ENCODE measurements at regions of chr6 and their contacts with region 1.

Region 1: DNA sequence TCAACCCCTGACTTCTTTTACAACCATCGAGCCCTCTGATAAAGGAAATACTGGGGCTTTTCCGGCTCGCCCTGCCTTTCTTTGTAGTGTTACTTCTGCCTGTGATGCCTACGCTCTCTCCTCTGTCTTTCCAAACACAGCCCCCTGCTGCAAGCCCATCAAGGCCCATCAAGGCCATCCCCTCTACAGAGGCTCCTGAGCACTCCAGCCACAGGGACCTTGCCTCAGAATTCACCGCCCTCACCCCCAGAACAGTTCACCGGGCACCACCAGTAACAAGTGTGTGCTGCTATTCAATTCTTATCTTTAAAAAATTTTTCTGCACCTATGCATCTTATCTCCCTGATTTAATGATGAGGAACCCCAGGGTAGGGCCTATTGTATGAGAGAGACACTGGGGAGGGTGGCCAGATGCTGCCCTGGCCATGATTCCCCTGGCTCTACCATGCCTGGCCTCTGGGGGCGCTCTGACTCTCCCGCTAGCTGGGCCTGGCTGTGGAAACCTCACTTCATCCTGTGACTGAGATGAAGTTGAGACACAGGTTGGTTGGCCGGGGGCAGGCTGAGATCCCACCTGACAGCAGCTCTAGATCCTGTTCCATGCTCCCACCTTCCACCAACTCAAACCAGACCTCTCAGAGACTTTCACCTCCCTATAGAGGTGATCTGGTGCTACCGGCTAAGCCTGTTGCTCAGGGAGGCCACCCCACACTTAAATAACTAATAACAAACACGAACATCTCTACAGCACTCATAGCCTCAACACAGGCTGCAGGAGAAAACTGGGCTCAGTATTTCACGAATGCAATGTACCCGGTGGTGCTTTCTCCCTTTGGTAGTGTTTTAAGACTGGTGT is 19.2 kb upstream of the GLP1R start:
- DNase-seq: peak; percentile 80
- ATAC-seq: peak; percentile 99
- H3K4me3 Mint-ChIP-seq: no peak overlapping the region
- H3K27ac Mint-ChIP-seq: no peak overlapping the region
- H3K4me1 Mint-ChIP-seq: peaks cover 8% of the 10 kb centered on the region
- H3K27me3 Mint-ChIP-seq: peaks cover 17% of the 10 kb centered on the region
- CTCF ChIP-seq: peak; percentile 92

Region 2: DNA sequence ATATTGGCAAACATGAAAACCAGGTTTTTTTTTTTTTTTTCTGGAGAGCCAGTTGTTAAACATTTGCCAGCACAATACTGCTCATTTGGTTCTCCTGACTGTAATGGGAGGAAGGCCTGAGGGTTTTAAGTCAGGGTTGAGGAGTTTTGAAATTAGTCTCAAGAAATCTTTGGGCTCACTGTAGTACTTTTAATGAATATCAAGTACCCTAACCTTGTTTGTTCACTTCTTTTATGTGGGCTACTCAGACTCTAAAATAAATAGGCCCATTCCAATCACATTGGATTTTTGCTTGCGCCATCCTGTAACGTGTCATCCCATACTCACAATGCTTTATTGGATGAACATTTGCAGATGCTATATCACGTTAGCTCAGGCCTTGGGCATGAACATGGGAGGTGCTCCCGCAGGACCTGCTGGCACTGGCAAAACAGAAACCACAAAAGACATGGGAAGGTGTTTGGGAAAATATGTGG is 167.4 kb before region 1 on chr6:
- CTCF ChIA-PET with region 1: no interaction called
- POLR2A ChIA-PET with region 1: no interaction called
- DNase-seq: no peak
- ATAC-seq: no peak
- H3K4me3 Mint-ChIP-seq: no peak overlapping the region
- H3K27ac Mint-ChIP-seq: no peak overlapping the region
- H3K4me1 Mint-ChIP-seq: 0 out of 2 replicates have a peak, but pooled peaks cover 2% of the 10 kb centered on the region
- H3K27me3 Mint-ChIP-seq: no peaks in the 10 kb centered on the region; the same call in 1 of the 2 replicates
- CTCF ChIP-seq: no peak

Region 3: GRCh38 chr6:38915205-38915925 is 114.0 kb before region 1 on chr6:
- CTCF ChIA-PET with region 1: no interaction called
- POLR2A ChIA-PET with region 1: no interaction called
- DNase-seq: no peak
- ATAC-seq: no peak
- H3K4me3 Mint-ChIP-seq: no peak overlapping the region
- H3K27ac Mint-ChIP-seq: no peak overlapping the region
- H3K4me1 Mint-ChIP-seq: no peaks in the 10 kb centered on the region
- H3K27me3 Mint-ChIP-seq: no peaks in the 10 kb centered on the region
- CTCF ChIP-seq: no peak

Region 4: DNA sequence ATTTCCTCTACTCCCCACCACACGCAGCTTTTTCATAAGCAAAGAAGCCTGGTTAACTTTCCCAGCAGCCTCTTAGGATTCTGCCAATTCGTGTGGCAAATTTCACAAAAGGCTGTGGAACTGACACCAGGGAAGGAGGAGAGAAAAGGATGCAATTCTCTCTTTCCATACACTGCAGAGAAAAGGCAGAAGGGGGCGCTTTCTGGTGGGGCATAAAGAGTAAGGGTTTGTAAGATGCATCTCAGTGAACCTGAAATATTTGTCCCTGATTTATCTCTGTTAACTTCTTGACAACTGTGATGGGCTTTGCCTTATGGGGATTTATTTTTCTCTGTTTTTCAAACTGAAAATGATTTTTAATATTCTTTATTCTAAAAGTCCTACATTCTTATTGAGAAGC is 26.3 kb before region 1 on chr6:
- CTCF ChIA-PET with region 1: interaction called, 13 read pairs
- POLR2A ChIA-PET with region 1: no interaction called
- DNase-seq: peak; percentile 52
- ATAC-seq: peak; percentile 76
- H3K4me3 Mint-ChIP-seq: no peak overlapping the region
- H3K27ac Mint-ChIP-seq: no peak overlapping the region
- H3K4me1 Mint-ChIP-seq: no peaks in the 10 kb centered on the region
- H3K27me3 Mint-ChIP-seq: peaks cover 8% of the 10 kb centered on the region
- CTCF ChIP-seq: 0 out of 2 replicates have a peak, but pooled peaks have one; percentile 32

Region 5: DNA sequence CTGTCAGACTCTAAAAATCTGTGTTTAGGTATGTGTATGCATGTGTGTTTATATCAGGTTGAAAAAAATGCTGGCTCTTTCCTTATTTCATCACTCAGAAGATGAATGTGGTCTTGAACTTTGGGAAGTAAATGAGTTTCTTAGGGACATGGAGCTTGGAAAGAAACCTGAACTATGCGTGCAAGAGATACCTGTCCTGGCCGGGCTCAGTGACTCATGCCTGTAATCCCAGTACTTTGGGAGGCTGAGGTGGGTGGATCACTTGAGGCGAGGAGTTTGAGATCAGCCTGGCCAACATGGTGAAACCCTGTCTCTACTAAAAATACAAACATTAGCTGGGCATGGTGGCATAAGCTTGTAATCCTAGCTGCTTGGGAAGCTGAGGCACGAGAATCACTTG is 14.8 kb after region 1 on chr6:
- CTCF ChIA-PET with region 1: interaction called, 10 read pairs
- POLR2A ChIA-PET with region 1: no interaction called
- DNase-seq: no peak
- ATAC-seq: no peak
- H3K4me3 Mint-ChIP-seq: no peak overlapping the region
- H3K27ac Mint-ChIP-seq: no peak overlapping the region
- H3K4me1 Mint-ChIP-seq: 0 out of 2 replicates have a peak, but pooled peaks cover 3% of the 10 kb centered on the region
- H3K27me3 Mint-ChIP-seq: peaks cover 38% of the 10 kb centered on the region
- CTCF ChIP-seq: no peak

Region 6: GRCh38 chr6:39062014-39062740 is 32.8 kb after region 1 on chr6:
- CTCF ChIA-PET with region 1: interaction called, 11 read pairs
- POLR2A ChIA-PET with region 1: no interaction called
- DNase-seq: no peak
- ATAC-seq: no peak
- H3K4me3 Mint-ChIP-seq: no peak overlapping the region
- H3K27ac Mint-ChIP-seq: no peak overlapping the region
- H3K4me1 Mint-ChIP-seq: no peaks in the 10 kb centered on the region
- H3K27me3 Mint-ChIP-seq: no peaks in the 10 kb centered on the region
- CTCF ChIP-seq: no peak

Region 7: DNA sequence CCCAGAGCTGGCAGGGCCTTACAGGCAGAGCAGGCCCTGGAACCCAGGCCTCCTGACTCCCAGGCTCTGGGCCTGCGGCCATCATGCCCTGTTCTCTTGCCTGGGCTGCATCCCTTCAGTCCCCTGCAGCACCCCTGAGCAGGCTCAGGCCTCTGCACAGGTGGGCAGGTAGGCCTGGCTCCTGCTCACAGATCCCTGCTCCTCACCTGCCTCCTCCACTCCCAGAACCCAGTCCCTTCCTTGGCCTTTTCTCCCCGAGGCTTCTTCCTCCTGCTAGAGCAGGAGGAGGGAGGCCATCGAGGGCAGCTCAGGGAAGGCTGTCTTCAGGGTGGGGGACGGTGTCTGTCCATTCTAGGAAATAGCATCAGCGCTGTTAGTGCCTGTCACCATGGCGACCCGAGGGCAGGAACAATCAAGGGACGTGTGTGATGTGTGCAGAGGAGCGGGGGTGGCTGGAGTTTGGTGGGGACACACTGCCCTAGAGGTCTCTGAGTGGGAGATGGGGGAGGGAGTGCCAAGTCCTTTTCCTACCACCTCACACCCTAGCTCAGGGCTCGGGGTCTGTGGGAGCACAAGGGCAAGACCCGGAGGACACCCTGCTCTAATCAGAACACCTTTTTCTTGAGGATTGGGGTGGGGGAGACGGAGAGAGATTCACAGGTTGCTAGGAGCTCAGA is 45.8 kb after region 1 on chr6:
- CTCF ChIA-PET with region 1: no interaction called
- POLR2A ChIA-PET with region 1: no interaction called
- DNase-seq: no peak
- ATAC-seq: no peak
- H3K4me3 Mint-ChIP-seq: no peak overlapping the region
- H3K27ac Mint-ChIP-seq: no peak overlapping the region
- H3K4me1 Mint-ChIP-seq: peaks cover 11% of the 10 kb centered on the region
- H3K27me3 Mint-ChIP-seq: no peaks in the 10 kb centered on the region; the same call in 1 of the 2 replicates
- CTCF ChIP-seq: no peak

Region 8: GRCh38 chr6:39088331-39088730 is 58.9 kb after region 1 on chr6:
- CTCF ChIA-PET with region 1: interaction called, 15 read pairs
- POLR2A ChIA-PET with region 1: no interaction called
- DNase-seq: peak; percentile 75
- ATAC-seq: peak; percentile 91
- H3K4me3 Mint-ChIP-seq: no peak overlapping the region
- H3K27ac Mint-ChIP-seq: no peak overlapping the region
- H3K4me1 Mint-ChIP-seq: peaks cover 49% of the 10 kb centered on the region
- H3K27me3 Mint-ChIP-seq: no peaks in the 10 kb centered on the region; the same call in 1 of the 2 replicates
- CTCF ChIP-seq: no peak

Measured in WTC11 (cell line).